ENCODE measurements at regions of chr9 and their contacts with region 1.

Region 1: DNA sequence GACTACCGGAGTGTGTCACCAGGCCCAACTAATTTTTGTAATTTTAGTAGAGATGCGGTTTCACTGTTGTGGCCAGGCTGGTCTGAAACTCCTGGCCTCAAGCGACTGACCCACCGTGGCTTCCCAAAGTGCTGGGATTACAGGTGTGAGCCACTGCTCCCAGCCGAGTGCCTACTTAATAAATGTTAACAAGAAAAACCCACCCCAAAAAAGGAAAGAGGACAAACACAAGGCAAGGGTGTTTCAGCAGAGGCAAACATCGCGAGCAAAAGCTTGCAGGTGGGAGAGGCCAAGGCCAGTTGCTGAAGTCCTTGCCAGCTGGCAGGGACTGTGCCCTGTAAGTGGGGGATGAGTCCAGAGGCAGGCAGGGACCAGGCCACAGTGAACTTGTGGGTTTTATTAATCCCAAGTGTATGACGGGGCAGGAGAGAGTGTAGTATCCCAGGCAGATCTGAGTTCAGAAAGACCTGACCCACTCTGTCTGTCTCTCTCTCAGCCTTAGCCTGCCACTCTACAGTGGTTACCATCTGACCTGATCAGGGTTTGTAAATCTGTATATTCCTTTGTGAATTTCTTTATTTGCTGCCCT is 6.4 kb upstream of the FPGS start:
- DNase-seq: no peak
- ATAC-seq: peak; percentile 45
- H3K4me3 Mint-ChIP-seq: peak overlapping the region; percentile 64
- H3K27ac Mint-ChIP-seq: peak overlapping the region; percentile 75
- H3K4me1 Mint-ChIP-seq: peaks cover 32% of the 10 kb centered on the region
- H3K27me3 Mint-ChIP-seq: no peaks in the 10 kb centered on the region
- CTCF ChIP-seq: no peak

Region 2: DNA sequence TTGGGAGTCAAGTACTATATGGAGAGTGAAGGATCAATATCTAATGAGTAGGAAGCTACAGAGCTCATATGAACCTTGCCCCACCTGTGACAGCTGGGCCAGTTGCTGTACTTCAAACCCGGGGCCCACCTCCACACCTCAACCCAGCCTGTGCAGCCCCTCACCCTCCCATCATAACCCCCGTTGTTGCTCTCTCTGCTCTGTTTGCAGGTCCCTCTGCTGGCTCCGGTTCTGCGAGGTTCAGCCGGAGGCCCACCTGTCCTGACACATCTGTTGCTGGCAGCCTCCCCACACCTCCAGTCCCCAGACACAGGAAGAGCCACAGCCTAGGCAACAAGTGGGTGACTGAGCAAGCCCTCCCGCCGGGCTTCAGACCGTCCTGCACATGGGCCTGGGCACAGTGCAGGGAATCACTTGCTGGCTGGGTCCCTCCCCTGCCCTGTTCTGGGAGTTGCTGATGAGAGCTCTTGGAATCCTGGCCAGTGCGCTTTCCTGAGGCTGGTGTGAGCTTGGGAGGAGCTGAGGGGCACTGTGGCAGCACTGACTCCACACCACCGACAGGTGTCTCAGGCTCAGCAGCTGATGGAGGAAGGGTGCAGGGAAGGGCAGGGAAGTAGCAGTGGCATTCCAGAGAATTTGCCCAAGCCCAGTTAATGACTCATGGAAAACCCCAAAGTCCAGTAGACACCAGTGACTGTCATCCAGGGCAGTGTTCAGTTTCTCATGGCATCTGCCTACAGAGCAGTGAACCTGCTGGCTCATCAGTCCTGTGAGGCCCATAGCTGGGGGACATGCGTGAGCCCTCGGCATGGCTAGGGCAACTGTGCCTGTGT is 601.2 kb before region 1 on chr9:
- CTCF ChIA-PET with region 1: no interaction called
- POLR2A ChIA-PET with region 1: no interaction called
- intact Hi-C with region 1: no loop called
- DNase-seq: no peak
- ATAC-seq: no peak
- H3K4me3 Mint-ChIP-seq: no peak overlapping the region
- H3K27ac Mint-ChIP-seq: no peak overlapping the region
- H3K4me1 Mint-ChIP-seq: no peaks in the 10 kb centered on the region
- H3K27me3 Mint-ChIP-seq: no peaks in the 10 kb centered on the region
- CTCF ChIP-seq: no peak

Region 3: DNA sequence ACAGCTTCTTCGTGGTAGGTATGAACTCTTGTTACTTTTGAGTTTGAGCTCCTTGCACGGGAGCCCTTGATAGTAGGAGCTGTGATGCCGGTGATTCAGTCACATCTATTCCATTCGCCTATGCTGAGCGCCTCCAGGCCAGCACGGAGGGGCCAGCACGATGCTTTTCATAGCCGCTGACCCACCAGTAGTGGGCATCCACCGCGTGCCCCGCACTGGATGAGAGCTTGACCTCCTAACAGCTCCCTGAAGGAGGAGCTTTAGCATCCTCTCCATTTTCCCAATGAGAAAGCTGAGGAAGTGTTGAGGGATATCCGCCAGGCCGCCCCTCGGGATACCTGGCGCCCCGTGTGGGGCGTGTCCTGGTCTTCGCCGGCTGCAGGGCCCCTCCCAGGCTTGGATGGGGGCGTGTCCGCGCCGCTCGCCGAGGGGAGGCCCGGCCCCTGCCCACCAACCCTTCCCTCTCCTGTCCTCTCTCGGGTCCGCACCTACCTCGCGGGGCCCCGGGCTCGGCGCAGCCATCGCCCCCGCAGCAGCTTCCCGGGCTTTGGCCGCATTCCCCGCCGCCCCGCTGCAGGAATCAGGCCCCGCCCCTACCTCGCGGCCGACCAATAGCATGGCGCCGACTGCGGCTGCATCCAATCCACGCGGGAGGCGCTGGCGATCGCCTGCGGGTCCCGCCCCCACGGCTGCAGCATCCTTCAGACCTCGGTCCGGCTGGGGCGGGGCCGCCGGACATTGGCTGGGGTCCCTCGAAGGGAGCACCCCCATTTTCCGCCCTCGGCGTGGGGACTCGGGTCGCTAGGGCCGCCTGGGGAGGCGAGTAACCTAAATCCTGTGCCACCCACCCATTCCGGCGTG is 134.1 kb after region 1 on chr9 and contains the start of gene PIP5KL1:
- CTCF ChIA-PET with region 1: no interaction called
- POLR2A ChIA-PET with region 1: interaction called, 11 read pairs
- intact Hi-C with region 1: no loop called
- DNase-seq: peak; percentile 79
- ATAC-seq: peak; percentile 80
- H3K4me3 Mint-ChIP-seq: peak within 1 kb of the TSS; percentile 78
- H3K27ac Mint-ChIP-seq: no peak within 1 kb of the TSS
- H3K4me1 Mint-ChIP-seq: peaks cover 37% of the 10 kb centered on the region
- H3K27me3 Mint-ChIP-seq: peaks cover 3% of the 10 kb centered on the region
- CTCF ChIP-seq: no peak
- total RNA-seq, gene PIP5KL1: 1.7 and 1.8 TPM in 2 replicates

Measured in activated B cell treated with CpG ODN at 0.5 μM for 24 hours (primary cell).